ENCODE measurements at regions of chr4 and their contacts with region 1.

Region 1: DNA sequence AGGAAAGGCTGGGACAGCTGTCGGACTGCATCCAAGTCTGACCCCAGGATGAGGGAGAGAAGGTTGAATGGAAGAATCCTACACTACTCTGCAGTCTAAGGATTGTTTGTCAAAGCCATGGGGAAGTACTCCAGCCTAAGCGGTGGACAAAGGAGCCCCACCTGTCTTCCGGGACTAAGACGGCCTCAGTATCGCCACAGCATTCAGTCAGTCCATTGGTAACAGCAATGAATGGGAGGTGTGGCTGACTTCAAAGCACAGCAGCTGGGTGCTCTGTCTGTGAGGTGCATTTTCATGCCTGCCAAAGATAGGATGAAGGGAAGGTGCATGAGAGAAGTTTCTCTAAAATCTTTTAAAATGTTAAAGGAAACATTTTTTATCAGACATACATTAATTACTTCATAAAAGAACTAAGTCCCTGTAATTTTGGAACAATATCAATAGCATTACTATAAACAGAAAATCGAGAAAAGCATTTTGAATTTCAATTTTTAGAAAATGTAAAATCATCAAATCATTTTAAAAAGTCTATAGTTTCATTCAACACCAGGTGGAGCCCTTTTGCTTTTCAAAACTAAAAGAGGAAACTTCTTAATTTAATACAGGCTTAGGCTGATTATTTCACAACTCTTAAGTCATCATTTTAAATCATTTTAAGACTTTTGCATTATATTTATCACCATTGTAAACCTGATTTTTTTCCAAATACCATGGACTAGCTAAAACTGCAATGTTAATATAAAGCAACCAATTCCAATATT is 27.6 kb upstream of the INTU start:
- DNase-seq: no peak
- H3K4me3 Mint-ChIP-seq: no peak overlapping the region
- H3K27ac Mint-ChIP-seq: no peak overlapping the region
- H3K4me1 Mint-ChIP-seq: no peaks in the 10 kb centered on the region
- H3K27me3 Mint-ChIP-seq: peaks cover 5% of the 10 kb centered on the region

Region 2: DNA sequence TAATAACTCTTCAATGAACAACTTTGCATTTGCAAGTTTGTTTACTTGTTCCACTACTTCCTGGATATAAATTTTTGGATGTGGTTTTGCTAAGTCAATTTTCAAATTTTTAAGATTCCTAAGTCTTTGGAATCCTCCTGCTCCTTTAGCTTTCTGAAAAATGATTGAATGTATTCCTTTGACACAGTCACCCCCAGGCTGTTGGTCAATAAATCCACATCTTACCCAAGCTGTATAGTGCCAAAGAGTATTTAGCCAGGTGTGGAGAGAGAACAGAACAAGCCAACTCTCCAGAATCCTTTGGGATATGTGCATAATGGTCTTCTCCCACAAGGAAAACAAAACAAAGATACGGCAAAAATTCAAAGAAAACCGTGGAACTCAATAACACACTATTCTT is 29.2 kb before region 1 on chr4:
- CTCF ChIA-PET with region 1: no interaction called
- DNase-seq: no peak
- H3K4me3 Mint-ChIP-seq: no peak overlapping the region
- H3K27ac Mint-ChIP-seq: no peak overlapping the region
- H3K4me1 Mint-ChIP-seq: no peaks in the 10 kb centered on the region
- H3K27me3 Mint-ChIP-seq: no peaks in the 10 kb centered on the region

Region 3: DNA sequence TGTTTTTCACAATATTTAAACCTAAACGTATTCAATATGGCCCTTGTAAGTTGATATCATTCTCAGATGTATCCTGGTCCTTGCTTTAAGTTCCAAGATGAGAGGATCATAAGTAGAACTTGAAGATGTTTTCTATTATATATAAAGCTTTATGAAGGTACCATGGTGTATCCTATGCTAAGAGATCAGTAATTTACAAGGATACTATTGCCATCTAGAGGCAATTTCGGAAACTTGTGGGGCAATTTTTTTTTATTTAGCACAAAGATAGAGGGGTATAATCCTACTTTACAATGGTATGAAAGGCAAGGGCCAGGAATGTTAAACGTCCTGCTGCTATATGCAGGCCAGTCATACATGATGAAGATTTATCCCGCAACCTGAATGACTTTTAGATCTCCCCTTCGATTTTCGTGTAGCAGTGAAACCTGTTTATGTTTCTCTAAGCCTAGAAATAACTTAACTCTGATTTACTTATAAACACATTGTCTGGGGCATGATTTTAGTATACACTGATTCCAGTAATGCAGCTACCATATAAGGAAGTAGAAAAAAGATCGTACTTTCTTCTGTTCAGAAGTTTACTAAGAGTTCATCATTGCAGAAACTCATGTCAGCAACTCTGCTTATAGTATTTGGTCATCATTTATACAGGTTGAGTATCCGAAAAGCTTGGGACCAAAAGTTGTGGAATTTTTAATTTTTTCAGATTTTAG is 127.6 kb after region 1 on chr4:
- CTCF ChIA-PET with region 1: interaction called, 16 read pairs
- DNase-seq: no peak
- H3K4me3 Mint-ChIP-seq: no peak overlapping the region
- H3K27ac Mint-ChIP-seq: no peak overlapping the region
- H3K4me1 Mint-ChIP-seq: no peaks in the 10 kb centered on the region
- H3K27me3 Mint-ChIP-seq: no peaks in the 10 kb centered on the region

Measured in activated naive CD4-positive, alpha-beta T cell treated with anti-CD3 and anti-CD28 coated beads, Interleukin-2, amount 10 ng/mL, durations not matched to agents 7 days and 5 days (primary cell).